ENCODE measurements at regions of chr1 and their contacts with region 1.

Region 1: GRCh38 chr1:235304549-235305451 is 23.2 kb downstream of the ARID4B start:
- DNase-seq: no peak
- H3K4me3 Mint-ChIP-seq: peak overlapping the region; percentile 13
- H3K27ac Mint-ChIP-seq: peak overlapping the region; percentile 72
- H3K4me1 Mint-ChIP-seq: peaks cover 40% of the 10 kb centered on the region
- H3K27me3 Mint-ChIP-seq: no peaks in the 10 kb centered on the region

Region 2: GRCh38 chr1:235317168-235317567 is 12.4 kb after region 1 on chr1:
- intact Hi-C with region 1: loop called (anchors 1 kb)
- DNase-seq: no peak
- H3K4me3 Mint-ChIP-seq: no peak overlapping the region
- H3K27ac Mint-ChIP-seq: peak overlapping the region; percentile 49
- H3K4me1 Mint-ChIP-seq: peaks cover 71% of the 10 kb centered on the region
- H3K27me3 Mint-ChIP-seq: no peaks in the 10 kb centered on the region

Region 3: DNA sequence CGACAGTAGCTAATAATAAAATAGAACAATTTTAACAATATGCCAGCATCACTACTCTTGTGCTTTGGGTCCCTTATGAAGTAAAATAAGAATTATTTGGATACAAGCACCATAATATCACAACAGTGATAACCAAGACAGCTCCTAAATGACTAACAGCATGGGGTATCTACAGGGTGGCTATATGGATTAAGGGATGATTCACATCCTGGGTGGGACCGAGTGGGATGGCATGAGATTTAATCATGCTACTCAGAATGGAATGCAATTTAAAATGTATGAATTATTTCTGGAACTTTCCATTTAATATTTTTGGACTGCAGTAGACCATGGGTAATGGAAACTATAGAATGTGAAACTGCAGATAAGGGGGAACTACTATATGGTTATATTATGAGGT is 227.6 kb after region 1 on chr1:
- intact Hi-C with region 1: no loop called
- DNase-seq: no peak
- H3K4me3 Mint-ChIP-seq: no peak overlapping the region
- H3K27ac Mint-ChIP-seq: no peak overlapping the region
- H3K4me1 Mint-ChIP-seq: no peaks in the 10 kb centered on the region
- H3K27me3 Mint-ChIP-seq: peaks cover 6% of the 10 kb centered on the region

Measured in activated T-helper 1 cell treated with anti-CD3 and anti-CD28 coated beads, Interleukin-12 subunit alpha, Interleukin-12 subunit beta, Interleukin-2, Interleukin-4 antibody, amounts not matched to agents 30 ng/mL and 10 ng/mL and 1 ng/mL, durations not matched to agents 14 hours and 24 hours and 36 hours (primary cell).